ENCODE measurements at regions of chr10 and their contacts with region 1.

Region 1: GRCh38 chr10:88553116-88553752 is 29.9 kb downstream of the RNLS start:
- DNase-seq: no peak
- H3K4me3 ChIP-seq: no peak overlapping the region
- H3K27ac ChIP-seq: no peak overlapping the region
- H3K4me1 ChIP-seq: no peaks in the 10 kb centered on the region
- H3K27me3 ChIP-seq: no peaks in the 10 kb centered on the region
- CTCF ChIP-seq: peak; percentile 38 to 90 (median 78)
- POLR2A ChIP-seq: no peak

Region 2: GRCh38 chr10:87861953-87862678 is 691.1 kb before region 1 on chr10:
- intact Hi-C with region 1: loop called (anchors 10 kb)
- DNase-seq: peak; percentile 92
- H3K4me3 ChIP-seq: peak overlapping the region; percentile 69 to 97 (median 92)
- H3K27ac ChIP-seq: peak overlapping the region; percentile 96 to 99 (median 98)
- H3K4me1 ChIP-seq: peaks cover 4 to 20% (median 10%) of the 10 kb centered on the region in 3 donors
- H3K27me3 ChIP-seq: no peaks in the 10 kb centered on the region
- CTCF ChIP-seq: peak in 3 of 6 experiments; percentile 24 to 29 (median 27)
- POLR2A ChIP-seq: peak in 2 of 4 donors; percentile 42 to 82

Region 3: DNA sequence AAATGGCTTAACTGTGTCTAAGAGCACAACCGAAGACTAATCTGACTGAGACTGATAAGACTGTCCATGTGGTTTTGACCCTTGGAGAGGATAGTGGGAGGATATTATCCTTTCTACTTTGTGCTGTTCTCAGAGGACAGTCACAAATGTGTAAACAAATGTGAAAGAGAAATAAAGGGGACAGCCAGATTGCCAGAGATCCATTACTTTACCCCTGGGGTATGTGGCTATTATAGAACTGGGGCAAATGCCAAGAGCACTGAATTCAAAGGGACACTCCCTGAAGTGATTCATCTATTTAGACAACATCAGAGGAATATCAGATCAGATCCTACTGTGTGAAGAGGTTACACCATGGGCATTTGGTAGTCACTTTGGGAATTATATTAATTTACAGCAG is 124.8 kb before region 1 on chr10:
- intact Hi-C with region 1: no loop called
- DNase-seq: no peak
- H3K4me3 ChIP-seq: no peak overlapping the region
- H3K27ac ChIP-seq: no peak overlapping the region
- H3K4me1 ChIP-seq: peaks cover 0 to 13% (median 0%) of the 10 kb centered on the region in 3 donors
- H3K27me3 ChIP-seq: no peaks in the 10 kb centered on the region
- CTCF ChIP-seq: no peak
- POLR2A ChIP-seq: no peak

Region 4: DNA sequence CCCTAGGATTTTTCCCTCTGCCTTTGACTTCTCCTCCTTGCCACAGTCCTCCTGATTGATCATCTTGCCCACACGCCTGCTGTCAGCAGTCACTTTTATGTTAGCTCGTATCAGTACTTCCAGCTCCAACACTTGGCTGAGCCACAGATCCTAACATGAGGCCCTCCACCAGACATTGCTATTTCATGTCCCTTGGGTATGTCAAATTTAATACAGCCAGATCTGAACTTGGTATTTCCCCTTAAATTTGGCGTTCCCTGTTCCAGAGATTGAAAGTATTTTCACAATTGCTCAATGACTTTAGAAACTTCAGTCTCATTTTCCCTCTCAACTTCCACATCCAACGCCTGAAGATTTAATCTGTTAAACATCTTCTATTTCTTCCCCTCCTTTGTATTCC is 110.5 kb before region 1 on chr10:
- intact Hi-C with region 1: no loop called
- DNase-seq: no peak
- H3K4me3 ChIP-seq: no peak overlapping the region
- H3K27ac ChIP-seq: no peak overlapping the region
- H3K4me1 ChIP-seq: no peaks in the 10 kb centered on the region
- H3K27me3 ChIP-seq: no peaks in the 10 kb centered on the region
- CTCF ChIP-seq: no peak
- POLR2A ChIP-seq: no peak

Region 5: GRCh38 chr10:88493691-88494483 is 59.3 kb before region 1 on chr10:
- intact Hi-C with region 1: no loop called
- DNase-seq: no peak
- H3K4me3 ChIP-seq: no peak overlapping the region
- H3K27ac ChIP-seq: no peak overlapping the region
- H3K4me1 ChIP-seq: no peaks in the 10 kb centered on the region
- H3K27me3 ChIP-seq: no peaks in the 10 kb centered on the region
- CTCF ChIP-seq: no peak
- POLR2A ChIP-seq: no peak